ENCODE measurements at regions of chr17 and their contacts with region 1.

Region 1: GRCh38 chr17:31266042-31266441 is 31.0 kb downstream of the OMG start:
- DNase-seq: peak in 4 of 5 donors; percentile 3 to 19 (median 12)
- H3K4me3 ChIP-seq: no peak overlapping the region
- H3K4me3 Mint-ChIP-seq: no peak overlapping the region
- H3K27ac ChIP-seq: no peak overlapping the region
- H3K27ac Mint-ChIP-seq: peak overlapping the region in 1 of 7 donors; percentile 26
- H3K4me1 ChIP-seq: no peaks in the 10 kb centered on the region
- H3K4me1 Mint-ChIP-seq: peaks cover 0 to 3% (median under 1%) of the 10 kb centered on the region in 4 donors
- H3K27me3 ChIP-seq: no peaks in the 10 kb centered on the region
- H3K27me3 Mint-ChIP-seq: no peaks in the 10 kb centered on the region

Region 2: GRCh38 chr17:31291820-31292219 is 25.8 kb after region 1 on chr17:
- CTCF ChIA-PET with region 1: no interaction called
- POLR2A ChIA-PET with region 1: no interaction called
- intact Hi-C with region 1: no loop called
- DNase-seq: no peak
- H3K4me3 ChIP-seq: no peak overlapping the region
- H3K4me3 Mint-ChIP-seq: no peak overlapping the region
- H3K27ac ChIP-seq: no peak overlapping the region
- H3K27ac Mint-ChIP-seq: no peak overlapping the region
- H3K4me1 ChIP-seq: no peaks in the 10 kb centered on the region
- H3K4me1 Mint-ChIP-seq: peaks cover 3 to 16% (median 4%) of the 10 kb centered on the region in 4 donors
- H3K27me3 ChIP-seq: no peaks in the 10 kb centered on the region
- H3K27me3 Mint-ChIP-seq: no peaks in the 10 kb centered on the region

Region 3: DNA sequence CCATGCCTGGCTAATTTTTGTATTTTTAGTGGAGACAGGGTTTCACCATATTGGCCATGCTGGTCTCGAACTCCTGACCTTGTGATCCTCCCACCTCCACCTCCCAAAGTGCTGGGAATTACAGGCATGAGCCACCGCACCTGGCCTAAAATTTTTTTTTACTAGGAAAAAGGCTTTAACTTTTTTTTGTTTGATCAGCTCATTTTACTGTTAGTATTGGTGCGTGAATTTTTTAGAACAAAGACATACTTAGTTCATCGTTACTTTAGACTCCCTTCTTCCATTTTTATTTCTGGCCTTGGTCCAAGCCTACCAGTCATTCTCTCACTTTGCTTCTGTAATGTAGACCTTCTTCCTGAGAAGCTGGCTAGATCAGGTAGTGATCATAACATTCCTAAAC is 100.0 kb after region 1 on chr17:
- CTCF ChIA-PET with region 1: interaction called, 36 read pairs
- POLR2A ChIA-PET with region 1: no interaction called
- intact Hi-C with region 1: no loop called
- DNase-seq: no peak
- H3K4me3 ChIP-seq: no peak overlapping the region
- H3K4me3 Mint-ChIP-seq: no peak overlapping the region
- H3K27ac ChIP-seq: no peak overlapping the region
- H3K27ac Mint-ChIP-seq: peak overlapping the region in 1 of 7 donors; percentile 2
- H3K4me1 ChIP-seq: peaks cover under 1% of the 10 kb centered on the region
- H3K4me1 Mint-ChIP-seq: peaks cover under 1 to 7% (median 4%) of the 10 kb centered on the region in 4 donors
- H3K27me3 ChIP-seq: no peaks in the 10 kb centered on the region
- H3K27me3 Mint-ChIP-seq: no peaks in the 10 kb centered on the region

Region 4: GRCh38 chr17:31373150-31374093 is 107.4 kb after region 1 on chr17:
- CTCF ChIA-PET with region 1: interaction called, 36 read pairs
- POLR2A ChIA-PET with region 1: no interaction called
- intact Hi-C with region 1: loop called (anchors 1 kb)
- DNase-seq: peak in 4 of 5 donors; percentile 60 to 67 (median 63)
- H3K4me3 ChIP-seq: no peak overlapping the region
- H3K4me3 Mint-ChIP-seq: peak overlapping the region in 1 of 8 donors; percentile 1
- H3K27ac ChIP-seq: no peak overlapping the region
- H3K27ac Mint-ChIP-seq: peak overlapping the region in 1 of 7 donors; percentile 29
- H3K4me1 ChIP-seq: peaks cover 9% of the 10 kb centered on the region
- H3K4me1 Mint-ChIP-seq: peaks cover 11 to 27% (median 20%) of the 10 kb centered on the region in 4 donors
- H3K27me3 ChIP-seq: no peaks in the 10 kb centered on the region
- H3K27me3 Mint-ChIP-seq: no peaks in the 10 kb centered on the region